ENCODE measurements at regions of chr12 and their contacts with region 1.

Region 1: DNA sequence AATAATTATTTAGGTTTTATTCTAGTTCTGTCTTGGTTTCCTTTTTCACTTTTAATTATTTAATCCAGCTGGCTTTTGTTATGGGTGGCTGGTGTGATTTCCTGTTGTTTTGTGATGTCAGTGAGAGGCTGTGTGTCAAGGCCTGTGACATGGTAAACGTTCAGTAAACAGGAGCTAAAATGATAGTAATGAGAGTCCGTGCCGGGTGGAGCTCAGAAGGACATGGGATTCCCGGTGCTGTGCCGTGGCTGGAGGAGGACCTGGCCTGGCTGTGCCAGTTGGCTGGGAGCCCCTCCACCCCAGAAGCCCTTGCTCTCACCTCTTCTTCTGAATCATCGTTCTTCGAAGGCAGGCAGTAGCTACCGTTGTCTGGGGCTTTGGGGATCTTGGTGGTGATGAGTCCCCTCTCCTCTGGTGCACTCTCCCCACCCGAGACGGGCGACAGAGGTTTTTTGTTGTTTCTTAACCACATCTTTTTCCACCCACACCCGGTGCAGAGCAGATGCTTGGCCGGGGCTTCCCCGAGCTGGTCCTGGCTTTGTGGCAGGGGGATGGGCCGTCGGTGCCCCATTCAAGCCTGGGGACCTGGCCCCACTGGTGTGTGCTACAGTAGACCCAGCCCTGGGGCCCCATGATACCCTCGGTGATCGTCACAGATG is 29.1 kb downstream of the SH2B3 start:
- DNase-seq: peak; percentile 90 to 97 (median 92)
- H3K4me3 ChIP-seq: peak overlapping the region in 1 of 2 donors; percentile 38
- H3K4me3 Mint-ChIP-seq: peak overlapping the region; percentile 86 to 91 (median 88)
- H3K27ac ChIP-seq: peak overlapping the region; percentile 98
- H3K27ac Mint-ChIP-seq: peak overlapping the region; percentile 98 to 100 (median 99)
- H3K4me1 ChIP-seq: peaks cover 95% of the 10 kb centered on the region
- H3K4me1 Mint-ChIP-seq: peaks cover 66 to 96% (median 82%) of the 10 kb centered on the region in 4 donors
- H3K27me3 ChIP-seq: no peaks in the 10 kb centered on the region
- H3K27me3 Mint-ChIP-seq: no peaks in the 10 kb centered on the region

Region 2: DNA sequence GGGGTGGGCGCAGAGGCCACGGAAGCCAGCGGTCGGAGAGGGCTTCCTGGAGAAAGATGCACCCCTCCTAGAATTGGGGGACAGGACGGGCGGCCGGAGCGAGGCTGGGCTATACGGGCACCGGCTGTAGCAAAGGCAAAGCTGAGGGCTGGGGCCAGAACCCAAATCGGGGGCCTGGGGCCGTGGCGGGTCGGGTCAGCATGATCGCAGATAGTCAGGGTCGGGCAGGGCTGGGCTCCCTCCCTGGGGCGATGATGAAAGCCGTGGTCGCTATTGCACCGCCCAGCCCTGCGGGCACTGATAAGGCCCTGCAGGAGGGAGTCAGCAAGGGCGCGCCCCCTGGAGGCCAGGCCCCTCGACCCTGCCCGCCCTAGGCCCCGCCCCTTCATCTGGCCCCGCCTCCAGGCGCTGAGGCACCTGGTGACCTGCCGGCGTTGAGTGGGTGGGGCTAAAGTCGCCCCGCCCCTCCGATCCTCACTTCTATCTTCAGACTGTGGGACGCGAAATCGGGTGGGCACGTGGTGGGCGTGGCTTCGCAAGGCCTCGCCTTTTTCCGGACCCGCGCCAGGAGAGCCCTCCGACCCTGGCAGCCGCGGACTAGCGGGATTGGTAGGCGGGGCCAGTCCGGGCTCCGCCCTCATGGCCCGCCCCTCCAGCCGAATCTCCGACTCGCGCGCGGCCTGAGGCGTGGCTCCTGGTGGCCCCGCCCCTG is 29.5 kb before region 1 on chr12:
- CTCF ChIA-PET with region 1: interaction called, 71 read pairs
- POLR2A ChIA-PET with region 1: interaction called, 683 read pairs
- intact Hi-C with region 1: loop called (anchors 1 kb)
- DNase-seq: peak; percentile 97 to 98 (median 98)
- H3K4me3 ChIP-seq: peak overlapping the region; percentile 29 to 90
- H3K4me3 Mint-ChIP-seq: peak overlapping the region; percentile 86 to 95 (median 90)
- H3K27ac ChIP-seq: peak overlapping the region; percentile 97
- H3K27ac Mint-ChIP-seq: peak overlapping the region; percentile 92 to 98 (median 95)
- H3K4me1 ChIP-seq: peaks cover 61% of the 10 kb centered on the region
- H3K4me1 Mint-ChIP-seq: peaks cover 35 to 74% (median 52%) of the 10 kb centered on the region in 4 donors
- H3K27me3 ChIP-seq: no peaks in the 10 kb centered on the region
- H3K27me3 Mint-ChIP-seq: no peaks in the 10 kb centered on the region

Region 3: DNA sequence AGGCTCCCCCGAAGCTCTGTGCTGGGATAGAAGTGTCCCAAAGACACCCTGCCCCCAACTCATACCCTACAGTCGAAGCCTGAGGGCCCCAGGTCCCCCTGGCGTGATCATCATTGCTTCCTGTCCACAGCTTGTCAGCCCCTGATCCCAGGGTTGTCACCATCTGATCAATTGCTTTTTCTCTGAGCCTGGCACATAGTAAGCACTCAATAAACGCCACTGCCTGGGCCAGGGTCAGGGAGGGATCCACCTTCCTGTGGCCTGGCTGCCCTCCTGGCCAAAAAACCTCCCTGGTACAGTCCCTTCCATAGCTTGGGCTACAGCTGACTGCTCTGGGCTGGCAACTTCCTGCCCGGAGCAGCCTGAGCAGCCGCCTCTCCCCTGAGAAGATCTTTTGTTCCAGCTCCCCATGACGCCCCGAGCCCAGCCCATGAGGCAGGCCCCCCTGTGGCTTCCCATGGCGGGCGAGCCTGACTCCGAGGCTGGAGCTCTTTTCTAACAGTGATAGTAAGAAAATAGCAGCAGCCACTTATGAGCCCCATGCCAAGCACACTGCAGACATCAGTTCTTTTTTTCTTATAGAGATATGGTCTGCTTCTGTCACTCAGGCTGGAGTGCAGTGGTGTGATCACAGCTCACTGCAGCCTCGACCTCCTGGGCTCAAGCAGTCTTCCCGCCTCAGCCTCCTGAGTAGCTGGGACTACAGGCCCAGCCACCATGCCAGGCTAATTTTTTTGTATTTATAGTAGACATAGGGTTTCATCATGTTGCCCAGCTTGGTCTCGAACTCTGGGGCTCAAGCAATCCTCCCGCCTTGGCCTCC is 22.6 kb before region 1 on chr12:
- CTCF ChIA-PET with region 1: interaction called, 17 read pairs
- POLR2A ChIA-PET with region 1: interaction called, 683 read pairs
- intact Hi-C with region 1: no loop called
- DNase-seq: no peak
- H3K4me3 ChIP-seq: no peak overlapping the region
- H3K4me3 Mint-ChIP-seq: peak overlapping the region; percentile 18 to 87 (median 79)
- H3K27ac ChIP-seq: peak overlapping the region; percentile 97
- H3K27ac Mint-ChIP-seq: peak overlapping the region; percentile 90 to 98 (median 93)
- H3K4me1 ChIP-seq: peaks cover 81% of the 10 kb centered on the region
- H3K4me1 Mint-ChIP-seq: peaks cover 49 to 95% (median 78%) of the 10 kb centered on the region in 4 donors
- H3K27me3 ChIP-seq: no peaks in the 10 kb centered on the region
- H3K27me3 Mint-ChIP-seq: no peaks in the 10 kb centered on the region

Region 4: GRCh38 chr12:111419784-111420183 is 15.0 kb before region 1 on chr12:
- CTCF ChIA-PET with region 1: interaction called, 6 read pairs
- POLR2A ChIA-PET with region 1: interaction called, 683 read pairs
- intact Hi-C with region 1: no loop called
- DNase-seq: no peak
- H3K4me3 ChIP-seq: no peak overlapping the region
- H3K4me3 Mint-ChIP-seq: no peak overlapping the region
- H3K27ac ChIP-seq: no peak overlapping the region
- H3K27ac Mint-ChIP-seq: peak overlapping the region in 1 of 7 donors; percentile 72
- H3K4me1 ChIP-seq: peaks cover 14% of the 10 kb centered on the region
- H3K4me1 Mint-ChIP-seq: peaks cover 21 to 51% (median 37%) of the 10 kb centered on the region in 4 donors
- H3K27me3 ChIP-seq: no peaks in the 10 kb centered on the region
- H3K27me3 Mint-ChIP-seq: no peaks in the 10 kb centered on the region

Region 5: GRCh38 chr12:111444925-111445725 is 10.3 kb after region 1 on chr12:
- CTCF ChIA-PET with region 1: interaction called, 99 read pairs
- POLR2A ChIA-PET with region 1: interaction called, 192 read pairs
- intact Hi-C with region 1: loop called (anchors 1 kb)
- DNase-seq: peak; percentile 82 to 94 (median 86)
- H3K4me3 ChIP-seq: peak overlapping the region; percentile 12 to 35
- H3K4me3 Mint-ChIP-seq: peak overlapping the region; percentile 64 to 86 (median 77)
- H3K27ac ChIP-seq: peak overlapping the region; percentile 71
- H3K27ac Mint-ChIP-seq: peak overlapping the region; percentile 87 to 100 (median 97)
- H3K4me1 ChIP-seq: peaks cover 81% of the 10 kb centered on the region
- H3K4me1 Mint-ChIP-seq: peaks cover 46 to 92% (median 77%) of the 10 kb centered on the region in 4 donors
- H3K27me3 ChIP-seq: no peaks in the 10 kb centered on the region
- H3K27me3 Mint-ChIP-seq: no peaks in the 10 kb centered on the region

Region 6: GRCh38 chr12:111557271-111558106 is 122.7 kb after region 1 on chr12:
- CTCF ChIA-PET with region 1: no interaction called
- POLR2A ChIA-PET with region 1: no interaction called
- intact Hi-C with region 1: no loop called
- DNase-seq: no peak
- H3K4me3 ChIP-seq: no peak overlapping the region
- H3K4me3 Mint-ChIP-seq: no peak overlapping the region
- H3K27ac ChIP-seq: no peak overlapping the region
- H3K27ac Mint-ChIP-seq: no peak overlapping the region
- H3K4me1 ChIP-seq: no peaks in the 10 kb centered on the region
- H3K4me1 Mint-ChIP-seq: peaks cover 10 to 22% (median 15%) of the 10 kb centered on the region in 4 donors
- H3K27me3 ChIP-seq: no peaks in the 10 kb centered on the region
- H3K27me3 Mint-ChIP-seq: no peaks in the 10 kb centered on the region

Region 7: GRCh38 chr12:111715279-111715678 is 280.5 kb after region 1 on chr12:
- CTCF ChIA-PET with region 1: no interaction called
- POLR2A ChIA-PET with region 1: no interaction called
- intact Hi-C with region 1: no loop called
- DNase-seq: no peak
- H3K4me3 ChIP-seq: no peak overlapping the region
- H3K4me3 Mint-ChIP-seq: no peak overlapping the region
- H3K27ac ChIP-seq: no peak overlapping the region
- H3K27ac Mint-ChIP-seq: no peak overlapping the region
- H3K4me1 ChIP-seq: no peaks in the 10 kb centered on the region
- H3K4me1 Mint-ChIP-seq: peaks cover 0 to 1% (median 0%) of the 10 kb centered on the region in 4 donors
- H3K27me3 ChIP-seq: no peaks in the 10 kb centered on the region
- H3K27me3 Mint-ChIP-seq: no peaks in the 10 kb centered on the region

Measured in CD4-positive, alpha-beta memory T cell (primary cell).